ENCODE measurements at regions of chr1 and their contacts with region 1.

Region 1: DNA sequence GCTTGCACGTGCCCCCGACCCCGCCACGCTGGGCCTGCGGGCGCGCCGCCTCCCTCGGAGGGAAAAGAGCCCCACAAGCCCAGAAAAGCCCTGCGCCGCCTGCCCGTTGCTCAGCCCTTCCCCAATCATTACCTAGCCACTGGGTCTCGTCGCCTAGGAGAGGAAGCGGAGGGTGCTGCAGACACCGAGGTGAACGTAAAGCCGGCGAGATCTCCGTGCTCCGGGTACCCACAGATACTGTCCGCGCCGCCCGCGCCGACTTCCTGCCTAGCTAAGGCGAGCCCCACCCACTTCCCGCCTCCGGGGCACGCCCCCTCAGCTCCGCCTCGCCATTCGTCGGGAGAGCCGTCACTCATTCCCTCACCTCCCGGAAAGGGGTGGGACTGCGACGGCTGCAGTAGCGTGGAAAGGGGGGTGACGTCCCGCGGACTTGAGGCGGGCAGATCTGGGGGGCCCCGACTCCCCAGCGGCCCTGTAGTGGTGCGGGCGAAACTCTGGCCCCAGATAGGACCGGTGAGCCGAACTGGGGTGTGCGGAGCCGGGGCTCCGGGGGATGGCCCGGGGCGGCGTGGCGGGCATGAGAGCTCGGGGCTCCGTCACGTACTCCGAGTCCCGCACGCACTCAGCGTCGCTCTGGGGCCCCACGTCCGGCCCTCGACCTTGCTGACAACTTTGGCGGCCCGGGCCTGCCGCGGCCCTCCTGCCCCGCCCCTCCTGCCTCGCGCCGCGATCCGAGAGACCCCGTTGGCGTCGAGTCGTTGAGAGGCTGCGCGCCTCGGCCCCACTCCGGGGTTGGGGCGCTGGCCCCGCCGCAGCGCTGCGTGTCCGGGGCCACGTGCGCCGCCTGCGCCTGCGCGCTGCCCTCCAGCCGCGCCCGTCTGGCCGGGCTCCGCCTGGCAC is at the start of gene ENO1:
- DNase-seq: peak; percentile 96 to 100 (median 99)
- ATAC-seq: peak; percentile 92
- H3K4me3 ChIP-seq: peak within 1 kb of the TSS; percentile 94
- H3K4me3 Mint-ChIP-seq: peak within 1 kb of the TSS; percentile 85 to 99 (median 94)
- H3K27ac ChIP-seq: peak within 1 kb of the TSS; percentile 90
- H3K27ac Mint-ChIP-seq: peak within 1 kb of the TSS; percentile 94 to 100 (median 97)
- H3K4me1 ChIP-seq: peaks cover 36 to 38% of the 10 kb centered on the region in 2 donors
- H3K4me1 Mint-ChIP-seq: peaks cover 21 to 48% (median 43%) of the 10 kb centered on the region in 7 donors
- H3K27me3 ChIP-seq: no peaks in the 10 kb centered on the region
- H3K27me3 Mint-ChIP-seq: peaks cover 0 to 3% (median 0%) of the 10 kb centered on the region in 5 donors
- total RNA-seq, gene ENO1: 198 to 3,569 (median 264) TPM

Region 2: DNA sequence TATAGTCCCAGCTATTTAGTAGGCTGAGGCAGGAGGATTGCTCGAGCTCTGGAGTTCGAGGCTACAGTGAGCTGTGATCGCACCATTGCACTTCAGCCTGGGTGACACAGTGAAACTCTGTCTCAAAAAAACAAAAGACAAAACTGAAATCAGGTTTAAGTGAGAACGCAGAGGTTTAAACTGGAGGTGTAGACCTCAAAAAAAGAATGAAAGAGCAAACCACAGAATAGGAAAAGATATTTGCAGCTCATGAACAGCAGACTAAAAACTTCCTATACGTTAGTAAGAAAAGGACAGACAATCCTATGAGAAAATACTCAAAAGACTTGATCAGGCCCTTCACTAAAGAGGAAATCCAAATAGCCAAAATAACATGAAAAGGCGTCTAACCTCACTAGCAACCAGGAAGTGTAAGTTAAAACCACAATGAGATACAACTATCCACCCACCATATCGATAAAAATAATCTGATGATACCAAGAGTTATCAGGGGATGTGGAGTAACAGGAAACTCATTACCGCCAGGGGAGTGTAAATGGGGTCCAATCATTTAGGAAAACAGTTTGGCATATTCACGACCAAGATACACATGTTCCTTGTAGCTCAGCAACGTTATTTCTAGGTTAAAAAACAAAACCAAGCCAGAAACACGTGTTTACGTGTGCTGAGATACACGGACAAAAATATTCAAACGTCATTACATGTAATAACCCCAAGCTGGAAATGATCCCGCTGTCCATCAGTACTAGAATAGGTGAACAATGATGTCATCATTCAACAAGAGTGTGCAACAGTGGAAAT is 947.9 kb before region 1 on chr1:
- CTCF ChIA-PET with region 1: no interaction called
- POLR2A ChIA-PET with region 1: no interaction called
- intact Hi-C with region 1: no loop called
- DNase-seq: no peak
- ATAC-seq: peak; percentile 72
- H3K4me3 ChIP-seq: peak overlapping the region; percentile 10
- H3K4me3 Mint-ChIP-seq: peak overlapping the region; percentile 42 to 66 (median 58)
- H3K27ac ChIP-seq: no peak overlapping the region
- H3K27ac Mint-ChIP-seq: peak overlapping the region in 6 of 9 donors; percentile 5 to 67 (median 52)
- H3K4me1 ChIP-seq: peaks cover 13 to 17% of the 10 kb centered on the region in 2 donors
- H3K4me1 Mint-ChIP-seq: peaks cover 19 to 26% (median 24%) of the 10 kb centered on the region in 7 donors
- H3K27me3 ChIP-seq: no peaks in the 10 kb centered on the region
- H3K27me3 Mint-ChIP-seq: peaks cover 0 to 6% (median 0%) of the 10 kb centered on the region in 5 donors

Region 3: DNA sequence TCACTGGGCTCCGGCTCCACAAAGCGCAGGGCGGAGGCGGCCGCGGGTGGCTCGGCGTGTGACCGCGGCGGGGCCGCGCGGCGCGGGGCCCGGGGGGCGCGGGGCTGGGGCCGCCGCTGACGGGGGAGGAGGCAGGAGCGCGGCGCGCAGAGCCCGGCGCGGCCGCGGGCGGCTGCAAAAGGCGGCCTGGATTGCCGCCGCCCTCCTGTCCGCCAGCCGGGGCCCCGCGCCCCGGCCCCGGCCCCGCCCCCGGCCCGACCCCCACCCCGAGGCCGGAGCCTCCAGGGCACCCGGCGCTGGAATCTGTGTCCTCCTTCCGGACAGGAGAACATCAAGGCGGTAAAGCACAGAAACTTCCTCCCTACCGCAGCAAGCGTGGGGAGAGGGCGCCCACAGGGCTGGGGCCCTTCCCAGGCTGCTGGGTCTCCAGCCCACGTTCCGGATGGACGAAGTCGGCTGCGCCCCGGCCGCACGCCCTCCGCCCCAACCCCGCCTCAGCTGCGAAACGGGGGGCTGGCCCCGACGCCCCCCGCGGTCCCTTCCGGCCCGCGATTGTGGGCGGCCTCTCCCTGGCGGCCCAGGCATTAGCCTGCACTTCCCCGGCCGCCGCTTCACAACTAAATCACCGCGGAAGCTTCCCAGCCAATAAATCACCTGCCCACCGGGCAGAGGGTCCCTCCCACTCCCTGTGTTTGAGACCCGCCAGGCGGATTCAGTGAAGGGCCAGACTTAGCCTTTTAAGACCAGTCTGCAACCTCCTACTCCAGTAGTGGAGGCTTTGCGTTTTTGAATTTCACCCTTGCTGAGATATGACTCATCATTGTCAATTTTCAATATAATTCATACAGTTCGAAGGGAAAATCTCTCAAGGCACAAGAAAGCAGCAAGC is 454.8 kb before region 1 on chr1:
- CTCF ChIA-PET with region 1: no interaction called
- POLR2A ChIA-PET with region 1: interaction called, 5 read pairs
- intact Hi-C with region 1: loop called in 1 of 2 experiments (anchors 5 kb)
- DNase-seq: peak in 5 of 9 donors; percentile 28 to 68 (median 42)
- ATAC-seq: peak; percentile 56
- H3K4me3 ChIP-seq: peak overlapping the region; percentile 96
- H3K4me3 Mint-ChIP-seq: peak overlapping the region in 9 of 10 donors; percentile 81 to 97 (median 92)
- H3K27ac ChIP-seq: peak overlapping the region; percentile 83
- H3K27ac Mint-ChIP-seq: peak overlapping the region; percentile 85 to 99 (median 94)
- H3K4me1 ChIP-seq: peaks cover 57 to 68% of the 10 kb centered on the region in 2 donors
- H3K4me1 Mint-ChIP-seq: peaks cover 39 to 47% (median 45%) of the 10 kb centered on the region in 7 donors
- H3K27me3 ChIP-seq: no peaks in the 10 kb centered on the region
- H3K27me3 Mint-ChIP-seq: no peaks in the 10 kb centered on the region

Region 4: DNA sequence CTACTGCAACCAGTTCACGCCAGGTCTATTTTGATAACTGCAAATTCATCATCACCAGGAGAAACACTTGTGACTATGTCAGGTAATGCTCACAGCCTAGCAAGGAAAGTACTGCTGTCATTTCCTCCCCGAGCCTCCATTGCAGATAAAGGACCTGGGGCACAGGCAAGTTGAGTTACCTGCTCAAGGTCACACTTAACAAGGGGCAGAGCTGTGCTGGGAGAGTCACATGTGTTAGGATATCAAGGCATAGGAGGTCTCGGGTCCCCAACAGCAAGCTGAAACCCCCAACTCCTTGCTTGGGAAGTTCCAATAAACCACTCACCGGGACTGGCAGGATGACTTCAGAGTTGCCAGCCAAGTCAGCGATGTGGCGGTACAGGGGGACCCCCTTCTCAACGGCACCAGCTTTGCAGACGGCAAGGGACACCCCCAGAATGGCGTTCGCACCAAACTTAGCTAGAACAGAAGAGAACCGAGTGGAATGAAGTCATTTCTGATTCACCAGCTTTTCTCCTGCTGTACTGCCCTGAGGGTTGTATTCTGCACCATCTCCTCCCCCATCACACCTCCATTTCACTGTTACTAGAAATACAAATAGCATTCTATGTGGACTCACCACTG is 11.8 kb before region 1 on chr1:
- CTCF ChIA-PET with region 1: interaction called, 10 read pairs
- POLR2A ChIA-PET with region 1: interaction called, 55 read pairs
- intact Hi-C with region 1: loop called in 1 of 2 experiments (anchors 1 kb)
- DNase-seq: no peak
- ATAC-seq: no peak
- H3K4me3 ChIP-seq: no peak overlapping the region
- H3K4me3 Mint-ChIP-seq: peak overlapping the region in 1 of 10 donors; percentile 47
- H3K27ac ChIP-seq: no peak overlapping the region
- H3K27ac Mint-ChIP-seq: peak overlapping the region in 3 of 9 donors; percentile 47 to 79 (median 65)
- H3K4me1 ChIP-seq: peaks cover 0 to 5% of the 10 kb centered on the region in 2 donors
- H3K4me1 Mint-ChIP-seq: peaks cover 6 to 71% (median 19%) of the 10 kb centered on the region in 7 donors
- H3K27me3 ChIP-seq: no peaks in the 10 kb centered on the region
- H3K27me3 Mint-ChIP-seq: no peaks in the 10 kb centered on the region

Region 5: DNA sequence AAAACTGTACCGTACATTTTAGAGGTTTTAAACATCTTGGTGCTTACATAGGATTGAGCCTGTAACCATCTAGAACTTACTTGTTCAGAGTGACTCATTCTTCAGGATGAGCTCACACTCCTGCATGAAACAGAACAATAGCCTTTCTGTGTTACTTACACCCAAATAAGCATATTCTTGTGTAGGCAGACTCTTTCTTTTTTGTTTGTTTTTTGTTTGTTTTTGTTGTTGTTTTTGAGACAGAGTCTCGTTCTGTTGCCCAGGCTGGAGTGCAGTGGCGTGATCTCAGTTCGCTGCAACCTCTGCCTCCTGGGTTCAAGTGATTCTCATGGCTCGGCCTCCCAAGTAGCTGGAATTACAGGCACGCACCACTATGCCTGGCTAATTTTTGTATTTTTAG is 63.2 kb after region 1 on chr1:
- CTCF ChIA-PET with region 1: no interaction called
- POLR2A ChIA-PET with region 1: interaction called, 13 read pairs
- intact Hi-C with region 1: loop called in 1 of 2 experiments (anchors 2 kb)
- DNase-seq: no peak
- ATAC-seq: no peak
- H3K4me3 ChIP-seq: no peak overlapping the region
- H3K4me3 Mint-ChIP-seq: peak overlapping the region in 1 of 10 donors; percentile 44
- H3K27ac ChIP-seq: no peak overlapping the region
- H3K27ac Mint-ChIP-seq: peak overlapping the region in 4 of 9 donors; percentile 38 to 86 (median 63)
- H3K4me1 ChIP-seq: peaks cover 19 to 80% of the 10 kb centered on the region in 2 donors
- H3K4me1 Mint-ChIP-seq: peaks cover 65 to 90% (median 81%) of the 10 kb centered on the region in 7 donors
- H3K27me3 ChIP-seq: no peaks in the 10 kb centered on the region
- H3K27me3 Mint-ChIP-seq: no peaks in the 10 kb centered on the region

Region 6: GRCh38 chr1:8987881-8988617 is 109.4 kb after region 1 on chr1:
- CTCF ChIA-PET with region 1: interaction called, 4 read pairs
- POLR2A ChIA-PET with region 1: interaction called, 41 read pairs
- intact Hi-C with region 1: loop called (anchors 5 kb)
- DNase-seq: peak; percentile 19 to 78 (median 65)
- ATAC-seq: peak; percentile 89
- H3K4me3 ChIP-seq: no peak overlapping the region
- H3K4me3 Mint-ChIP-seq: peak overlapping the region; percentile 36 to 85 (median 73)
- H3K27ac ChIP-seq: peak overlapping the region; percentile 65
- H3K27ac Mint-ChIP-seq: peak overlapping the region; percentile 57 to 99 (median 93)
- H3K4me1 ChIP-seq: peaks cover 4 to 22% of the 10 kb centered on the region in 2 donors
- H3K4me1 Mint-ChIP-seq: peaks cover 9 to 63% (median 41%) of the 10 kb centered on the region in 7 donors
- H3K27me3 ChIP-seq: no peaks in the 10 kb centered on the region
- H3K27me3 Mint-ChIP-seq: no peaks in the 10 kb centered on the region

Region 7: GRCh38 chr1:9166289-9167235 is 287.9 kb after region 1 on chr1:
- CTCF ChIA-PET with region 1: no interaction called
- POLR2A ChIA-PET with region 1: no interaction called
- intact Hi-C with region 1: no loop called
- DNase-seq: no peak
- ATAC-seq: no peak
- H3K4me3 ChIP-seq: no peak overlapping the region
- H3K4me3 Mint-ChIP-seq: no peak overlapping the region
- H3K27ac ChIP-seq: no peak overlapping the region
- H3K27ac Mint-ChIP-seq: no peak overlapping the region
- H3K4me1 ChIP-seq: no peaks in the 10 kb centered on the region
- H3K4me1 Mint-ChIP-seq: peaks cover 0 to 19% (median 0%) of the 10 kb centered on the region in 7 donors
- H3K27me3 ChIP-seq: no peaks in the 10 kb centered on the region
- H3K27me3 Mint-ChIP-seq: no peaks in the 10 kb centered on the region

Region 8: DNA sequence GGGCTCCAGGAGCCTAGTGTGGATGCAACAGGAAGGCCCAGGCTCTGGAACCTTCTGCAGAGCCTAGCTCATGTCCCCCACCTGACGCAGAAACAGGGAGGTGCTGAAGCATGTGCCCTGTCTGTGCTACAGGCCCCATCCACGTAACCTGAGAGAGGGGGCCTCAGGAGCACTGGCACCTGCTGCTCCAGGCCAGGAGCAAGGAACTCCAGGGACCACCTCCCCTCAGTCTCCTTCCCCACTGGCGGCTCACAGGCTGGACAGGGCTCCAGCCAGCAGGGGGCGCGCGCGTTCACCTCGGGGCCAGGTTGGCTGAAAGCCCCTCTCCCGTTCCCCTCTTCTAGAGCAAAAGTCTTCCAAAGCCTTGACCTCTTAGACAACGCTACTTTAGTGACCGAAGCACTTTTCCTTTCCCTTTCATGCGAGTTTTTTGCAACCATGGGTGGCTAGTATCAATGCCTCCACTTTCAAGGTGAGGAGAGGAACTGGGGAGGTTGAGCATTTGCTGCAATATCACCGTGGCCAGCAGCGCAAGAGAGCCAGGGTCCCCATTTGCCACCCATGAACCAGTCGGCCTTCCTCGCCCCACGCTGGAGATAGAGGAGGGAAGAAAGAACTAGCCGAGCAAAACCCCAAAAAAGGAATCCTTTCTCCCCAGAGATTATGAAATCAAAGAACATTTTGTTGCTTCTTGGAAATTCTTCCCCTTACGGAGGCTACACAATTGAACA is 302.6 kb after region 1 on chr1:
- CTCF ChIA-PET with region 1: no interaction called
- POLR2A ChIA-PET with region 1: no interaction called
- intact Hi-C with region 1: loop called in 1 of 2 experiments (anchors 5 kb)
- DNase-seq: peak; percentile 34 to 89 (median 64)
- ATAC-seq: peak; percentile 71
- H3K4me3 ChIP-seq: peak overlapping the region; percentile 11
- H3K4me3 Mint-ChIP-seq: peak overlapping the region; percentile 69 to 96 (median 81)
- H3K27ac ChIP-seq: no peak overlapping the region
- H3K27ac Mint-ChIP-seq: peak overlapping the region in 1 of 9 donors; percentile 93
- H3K4me1 ChIP-seq: peaks cover 5% of the 10 kb centered on the region in 2 donors
- H3K4me1 Mint-ChIP-seq: peaks cover 0 to 25% (median 7%) of the 10 kb centered on the region in 7 donors
- H3K27me3 ChIP-seq: no peaks in the 10 kb centered on the region
- H3K27me3 Mint-ChIP-seq: peaks cover 11 to 31% (median 17%) of the 10 kb centered on the region in 5 donors

Region 9: DNA sequence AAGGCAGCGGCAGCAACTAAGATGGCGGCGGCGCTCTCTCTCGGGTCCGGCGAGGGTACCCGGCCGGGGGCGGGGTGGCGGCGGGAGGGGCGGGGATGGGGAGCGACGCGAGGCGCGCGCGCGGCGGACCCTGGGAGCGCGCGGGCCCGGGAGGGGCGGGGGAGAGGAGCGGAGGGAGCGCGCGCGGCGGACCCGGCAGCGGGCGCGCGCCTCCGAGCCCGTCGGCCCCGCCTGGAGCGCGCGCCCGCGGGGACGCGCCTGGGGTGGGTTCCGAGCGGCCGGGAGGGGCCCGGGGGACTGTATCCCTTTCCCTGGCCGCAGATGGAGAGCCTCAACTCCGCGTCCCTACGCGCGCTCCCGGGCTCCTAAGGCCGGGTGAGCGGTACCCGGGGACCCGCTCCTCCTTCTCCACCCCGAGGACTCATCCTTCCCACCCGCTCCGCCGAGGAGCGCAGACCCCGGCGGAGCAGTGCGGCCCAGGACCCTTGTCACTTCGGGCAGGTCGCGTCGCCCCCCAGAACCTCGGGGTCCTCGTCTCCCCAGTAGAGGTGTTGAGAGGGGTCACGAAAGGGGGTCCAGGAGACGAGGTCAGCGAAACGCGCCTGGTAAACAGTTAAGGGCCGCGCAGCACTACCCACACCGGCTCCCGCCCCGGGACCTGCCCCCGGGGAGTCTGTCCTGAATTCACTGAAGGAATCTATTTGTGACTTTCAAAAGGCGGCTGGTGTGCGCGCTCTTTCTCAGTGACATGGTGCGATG is 945.4 kb after region 1 on chr1 and contains the start of gene CLSTN1:
- CTCF ChIA-PET with region 1: no interaction called
- POLR2A ChIA-PET with region 1: no interaction called
- intact Hi-C with region 1: loop called in 1 of 2 experiments (anchors 10 kb)
- DNase-seq: peak; percentile 73 to 88 (median 84)
- ATAC-seq: peak; percentile 86
- H3K4me3 ChIP-seq: peak within 1 kb of the TSS; percentile 82
- H3K4me3 Mint-ChIP-seq: peak within 1 kb of the TSS; percentile 95 to 99 (median 98)
- H3K27ac ChIP-seq: peak within 1 kb of the TSS; percentile 68
- H3K27ac Mint-ChIP-seq: peak within 1 kb of the TSS; percentile 80 to 97 (median 93)
- H3K4me1 ChIP-seq: peaks cover 24 to 34% of the 10 kb centered on the region in 2 donors
- H3K4me1 Mint-ChIP-seq: peaks cover 31 to 52% (median 46%) of the 10 kb centered on the region in 7 donors
- H3K27me3 ChIP-seq: no peaks in the 10 kb centered on the region
- H3K27me3 Mint-ChIP-seq: peaks cover 0 to 3% (median 0%) of the 10 kb centered on the region in 5 donors
- total RNA-seq, gene CLSTN1: 68.6 to 116 (median 85.6) TPM

Measured in naive thymus-derived CD4-positive, alpha-beta T cell (primary cell).